Activated CD4-positive, alpha-beta memory T cell treated with anti-CD3 and anti-CD28 coated beads for 36 hours (primary cell): ENCODE measurements at regions of chr3 and their contacts with region 1.

Region 1: GRCh38 chr3:17742108-17742879 is at the start of gene TBC1D5:
- DNase-seq: peak; percentile 96
- H3K4me3 Mint-ChIP-seq: peak within 1 kb of the TSS; percentile 94
- H3K27ac Mint-ChIP-seq: peak within 1 kb of the TSS; percentile 97
- H3K4me1 Mint-ChIP-seq: peaks cover 36% of the 10 kb centered on the region
- H3K27me3 Mint-ChIP-seq: no peaks in the 10 kb centered on the region
- total RNA-seq, gene TBC1D5: 49.2 to 53.7 TPM

Region 2: GRCh38 chr3:16589867-16590624 is 1152.2 kb before region 1 on chr3:
- CTCF ChIA-PET with region 1: no interaction called
- POLR2A ChIA-PET with region 1: no interaction called
- intact Hi-C with region 1: loop called (anchors 10 kb)
- DNase-seq: no peak
- H3K4me3 Mint-ChIP-seq: no peak overlapping the region
- H3K27ac Mint-ChIP-seq: no peak overlapping the region
- H3K4me1 Mint-ChIP-seq: peaks cover 12% of the 10 kb centered on the region
- H3K27me3 Mint-ChIP-seq: peaks cover 11% of the 10 kb centered on the region

Region 3: GRCh38 chr3:17023006-17023664 is 719.2 kb before region 1 on chr3:
- CTCF ChIA-PET with region 1: no interaction called
- POLR2A ChIA-PET with region 1: no interaction called
- intact Hi-C with region 1: loop called (anchors 10 kb)
- DNase-seq: peak; percentile 72
- H3K4me3 Mint-ChIP-seq: peak overlapping the region; percentile 52
- H3K27ac Mint-ChIP-seq: peak overlapping the region; percentile 87
- H3K4me1 Mint-ChIP-seq: peaks cover 73% of the 10 kb centered on the region
- H3K27me3 Mint-ChIP-seq: no peaks in the 10 kb centered on the region

Region 4: GRCh38 chr3:17678116-17678741 is 64.1 kb before region 1 on chr3:
- CTCF ChIA-PET with region 1: no interaction called
- POLR2A ChIA-PET with region 1: no interaction called
- intact Hi-C with region 1: loop called (anchors 2 kb)
- DNase-seq: peak; percentile 17
- H3K4me3 Mint-ChIP-seq: no peak overlapping the region
- H3K27ac Mint-ChIP-seq: no peak overlapping the region
- H3K4me1 Mint-ChIP-seq: peaks cover 17% of the 10 kb centered on the region
- H3K27me3 Mint-ChIP-seq: no peaks in the 10 kb centered on the region

Region 5: DNA sequence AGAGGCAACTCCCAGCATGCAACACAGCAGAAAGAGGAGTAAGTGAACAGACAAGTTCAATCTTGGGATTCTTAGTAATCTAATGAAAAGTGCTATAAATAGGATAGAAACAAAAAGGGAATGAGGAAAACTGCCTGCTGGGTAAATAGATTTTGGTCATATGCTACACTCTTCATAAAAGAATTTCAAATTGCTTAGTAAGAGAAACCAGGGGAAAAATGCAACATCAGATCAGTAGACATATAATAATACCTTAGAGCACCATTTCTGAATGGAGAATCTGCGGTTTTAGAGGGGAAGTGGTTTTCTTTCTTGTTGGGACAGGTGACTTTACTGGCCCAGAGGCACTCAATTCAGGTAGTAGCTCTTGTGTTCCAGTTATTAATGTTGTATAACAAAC is 13.5 kb after region 1 on chr3:
- CTCF ChIA-PET with region 1: no interaction called
- POLR2A ChIA-PET with region 1: no interaction called
- intact Hi-C with region 1: no loop called
- DNase-seq: no peak
- H3K4me3 Mint-ChIP-seq: no peak overlapping the region
- H3K27ac Mint-ChIP-seq: no peak overlapping the region
- H3K4me1 Mint-ChIP-seq: peaks cover 3% of the 10 kb centered on the region
- H3K27me3 Mint-ChIP-seq: peaks cover 1% of the 10 kb centered on the region

Region 6: DNA sequence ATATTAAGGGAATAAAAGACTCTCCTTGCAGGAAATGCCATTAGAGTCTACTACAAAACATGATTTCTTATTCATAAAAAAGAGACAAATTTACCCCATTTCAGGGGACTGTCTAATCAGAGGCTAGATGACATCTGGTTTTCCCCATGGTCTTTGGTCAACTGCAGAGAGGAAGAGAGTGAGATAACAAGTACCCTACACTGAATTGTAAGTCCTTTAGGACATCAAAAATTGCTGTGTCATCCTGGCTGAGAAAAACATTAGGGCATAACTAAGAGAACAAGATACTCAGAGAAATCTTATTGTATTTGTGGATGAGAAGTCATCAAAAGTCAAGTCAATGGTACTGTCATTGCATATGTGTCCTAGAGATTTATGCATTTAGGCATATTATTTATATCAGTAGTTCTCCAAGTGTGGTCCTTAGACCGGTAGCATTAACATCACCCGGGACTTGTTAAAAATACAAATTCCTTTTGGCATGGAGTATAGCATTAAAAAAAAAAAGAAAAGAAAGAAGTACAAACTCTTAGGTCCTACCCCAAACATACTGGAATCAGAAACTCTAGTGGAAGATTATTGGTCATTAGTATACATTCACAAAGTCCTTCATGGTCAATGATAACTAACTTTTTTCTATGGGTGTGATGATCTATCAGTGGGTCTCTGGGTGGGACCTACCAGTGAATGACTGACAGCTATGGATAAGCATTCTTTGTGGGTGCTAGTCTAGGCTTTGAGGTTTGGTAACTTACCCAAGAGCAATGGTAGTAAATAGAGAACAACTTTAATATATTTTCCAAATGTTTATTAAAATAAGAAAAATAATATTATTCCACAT is 29.1 kb after region 1 on chr3:
- CTCF ChIA-PET with region 1: no interaction called
- POLR2A ChIA-PET with region 1: interaction called, 5 read pairs
- intact Hi-C with region 1: loop called (anchors 1 kb)
- DNase-seq: no peak
- H3K4me3 Mint-ChIP-seq: no peak overlapping the region
- H3K27ac Mint-ChIP-seq: no peak overlapping the region
- H3K4me1 Mint-ChIP-seq: peaks cover 7% of the 10 kb centered on the region
- H3K27me3 Mint-ChIP-seq: peaks cover 9% of the 10 kb centered on the region